ENCODE measurements at regions of chr14 and their contacts with region 1.

Region 1: GRCh38 chr14:51094901-51095853 is at the start of gene TRIM9:
- DNase-seq: peak; percentile 94 to 98
- H3K4me3 ChIP-seq: peak within 1 kb of the TSS; percentile 76
- H3K27ac ChIP-seq: peak within 1 kb of the TSS; percentile 78
- H3K4me1 ChIP-seq: peaks cover 19% of the 10 kb centered on the region
- H3K27me3 ChIP-seq: no peaks in the 10 kb centered on the region
- CTCF ChIP-seq: no peak
- total RNA-seq, gene TRIM9: 1.5 and 2.1 TPM in 2 replicates

Region 2: GRCh38 chr14:49240383-49240782 is 1854.8 kb before region 1 on chr14:
- CTCF ChIA-PET with region 1: no interaction called
- POLR2A ChIA-PET with region 1: no interaction called
- intact Hi-C with region 1: no loop called
- DNase-seq: peak; percentile 21 to 69
- H3K4me3 ChIP-seq: no peak overlapping the region
- H3K27ac ChIP-seq: no peak overlapping the region
- H3K4me1 ChIP-seq: no peaks in the 10 kb centered on the region
- H3K27me3 ChIP-seq: no peaks in the 10 kb centered on the region
- CTCF ChIP-seq: no peak

Region 3: DNA sequence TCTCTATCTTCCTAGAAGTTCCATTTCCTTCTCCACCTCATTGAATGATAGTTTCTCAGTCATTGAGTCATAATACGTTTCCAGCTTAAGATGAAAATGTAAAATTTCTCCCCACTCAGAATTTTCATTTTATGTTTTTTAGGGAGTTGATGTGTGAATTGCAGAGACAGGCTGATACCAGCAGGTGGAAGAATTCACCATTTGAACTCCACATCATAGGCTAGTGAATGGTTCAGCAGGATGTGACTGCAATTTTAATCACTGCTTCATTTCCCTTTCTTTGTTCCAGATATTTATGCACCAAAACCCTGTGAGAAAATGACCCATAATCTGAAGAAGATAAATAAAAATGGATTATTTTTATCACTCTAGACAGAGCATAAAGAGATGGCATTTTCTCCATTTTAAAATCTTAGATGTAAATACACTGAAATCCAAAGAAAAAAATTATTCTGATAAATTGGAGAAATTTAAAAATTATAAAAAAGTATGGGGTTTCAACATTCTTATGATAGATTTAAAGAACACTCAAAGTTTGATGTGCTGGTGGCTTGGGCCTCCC is 140.3 kb before region 1 on chr14:
- CTCF ChIA-PET with region 1: interaction called, 3 read pairs
- POLR2A ChIA-PET with region 1: interaction called, 3 read pairs
- intact Hi-C with region 1: loop called (anchors 5 kb)
- DNase-seq: peak; percentile 12 to 52
- H3K4me3 ChIP-seq: peak overlapping the region; percentile 9; the same call in 1 of the 2 replicates
- H3K27ac ChIP-seq: peak overlapping the region; percentile 84
- H3K4me1 ChIP-seq: peaks cover 31% of the 10 kb centered on the region
- H3K27me3 ChIP-seq: no peaks in the 10 kb centered on the region
- CTCF ChIP-seq: peak; percentile 75

Region 4: GRCh38 chr14:51059044-51059443 is 36.1 kb before region 1 on chr14:
- CTCF ChIA-PET with region 1: interaction called, 14 read pairs
- POLR2A ChIA-PET with region 1: no interaction called
- intact Hi-C with region 1: no loop called
- DNase-seq: no peak
- H3K4me3 ChIP-seq: no peak overlapping the region
- H3K27ac ChIP-seq: no peak overlapping the region
- H3K4me1 ChIP-seq: no peaks in the 10 kb centered on the region
- H3K27me3 ChIP-seq: no peaks in the 10 kb centered on the region
- CTCF ChIP-seq: no peak

Region 5: DNA sequence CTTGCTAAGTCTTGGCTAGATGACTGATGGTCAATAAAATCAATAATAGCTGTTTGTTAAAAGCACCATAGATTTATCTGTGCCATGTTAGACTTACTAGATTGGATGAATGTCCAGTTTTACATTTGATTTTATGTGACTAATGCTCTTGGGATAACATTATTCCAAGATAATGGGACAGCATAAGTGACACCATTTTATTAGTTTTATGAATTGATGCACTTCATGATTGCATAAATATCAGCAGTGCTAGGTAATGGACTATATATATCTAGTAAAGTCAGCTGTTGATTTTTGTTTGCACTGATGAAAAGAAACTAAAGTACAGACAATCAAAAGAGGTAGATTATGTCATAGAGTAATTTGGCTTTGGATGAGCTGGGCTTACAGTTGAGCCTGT is 10.7 kb before region 1 on chr14:
- CTCF ChIA-PET with region 1: no interaction called
- POLR2A ChIA-PET with region 1: interaction called, 10 read pairs
- intact Hi-C with region 1: no loop called
- DNase-seq: no peak
- H3K4me3 ChIP-seq: no peak overlapping the region
- H3K27ac ChIP-seq: no peak overlapping the region
- H3K4me1 ChIP-seq: peaks cover 21% of the 10 kb centered on the region
- H3K27me3 ChIP-seq: no peaks in the 10 kb centered on the region
- CTCF ChIP-seq: no peak

Region 6: GRCh38 chr14:51219473-51220448 is 124.6 kb after region 1 on chr14:
- CTCF ChIA-PET with region 1: no interaction called
- POLR2A ChIA-PET with region 1: no interaction called
- intact Hi-C with region 1: loop called (anchors 10 kb)
- DNase-seq: no peak
- H3K4me3 ChIP-seq: no peak overlapping the region
- H3K27ac ChIP-seq: no peak overlapping the region
- H3K4me1 ChIP-seq: no peaks in the 10 kb centered on the region
- H3K27me3 ChIP-seq: no peaks in the 10 kb centered on the region
- CTCF ChIP-seq: peak; percentile 76

Region 7: DNA sequence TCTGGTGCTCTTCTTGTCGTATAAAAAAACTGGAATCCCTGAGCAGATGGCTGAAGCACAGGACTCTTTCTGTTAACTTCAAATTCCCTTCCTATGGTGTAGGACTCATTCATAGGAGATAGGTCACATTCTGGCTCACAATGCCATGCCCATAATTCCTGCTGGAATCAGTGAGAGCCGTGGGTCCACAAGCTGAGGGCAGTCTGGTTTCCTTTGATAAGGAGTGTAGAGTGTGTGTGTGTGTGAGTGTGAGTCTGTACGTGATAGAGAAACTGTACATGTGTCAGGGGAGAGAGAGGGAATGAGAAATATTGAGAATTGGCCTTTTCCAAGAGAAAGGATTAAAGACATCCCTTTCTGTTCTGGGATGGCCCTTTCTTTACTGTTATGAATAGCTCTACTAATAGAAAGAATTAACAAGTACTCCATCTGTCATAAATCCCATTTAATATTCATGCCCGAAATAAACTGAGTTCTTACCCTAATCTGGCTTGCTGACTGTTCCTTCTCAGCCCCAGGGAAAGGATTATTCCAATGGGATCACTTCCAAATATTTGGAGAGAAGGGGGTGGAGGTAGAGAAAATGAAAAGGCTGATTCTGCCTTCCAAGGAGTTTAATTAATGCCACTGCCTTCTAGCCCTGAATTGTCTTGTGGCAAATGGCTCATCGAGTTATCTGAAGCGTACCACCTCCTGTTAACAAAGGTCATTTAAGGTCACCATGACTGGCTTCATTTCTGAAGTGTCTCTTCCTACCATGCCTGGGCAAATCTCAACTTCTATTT is 223.8 kb after region 1 on chr14:
- CTCF ChIA-PET with region 1: no interaction called
- POLR2A ChIA-PET with region 1: no interaction called
- intact Hi-C with region 1: no loop called
- DNase-seq: no peak
- H3K4me3 ChIP-seq: no peak overlapping the region
- H3K27ac ChIP-seq: no peak overlapping the region
- H3K4me1 ChIP-seq: no peaks in the 10 kb centered on the region
- H3K27me3 ChIP-seq: no peaks in the 10 kb centered on the region
- CTCF ChIP-seq: no peak

Measured in PC-9 (cell line).